ENCODE measurements at regions of chr19 and their contacts with region 1.

Region 1: GRCh38 chr19:36120092-36120983 is 5.1 kb downstream of the TBCB start:
- DNase-seq: no peak
- ATAC-seq: no peak
- H3K4me3 ChIP-seq: no peak overlapping the region
- H3K27ac ChIP-seq: no peak overlapping the region
- H3K4me1 ChIP-seq: peaks cover 10% of the 10 kb centered on the region
- H3K27me3 ChIP-seq: no peaks in the 10 kb centered on the region
- CTCF ChIP-seq: no peak
- POLR2A ChIP-seq: no peak

Region 2: GRCh38 chr19:36172852-36173251 is 52.5 kb after region 1 on chr19:
- intact Hi-C with region 1: loop called (anchors 5 kb)
- DNase-seq: no peak
- ATAC-seq: no peak
- H3K4me3 ChIP-seq: no peak overlapping the region
- H3K27ac ChIP-seq: no peak overlapping the region
- H3K4me1 ChIP-seq: peaks cover 13% of the 10 kb centered on the region
- H3K27me3 ChIP-seq: no peaks in the 10 kb centered on the region
- CTCF ChIP-seq: no peak
- POLR2A ChIP-seq: no peak